PC-9 (cell line): ENCODE measurements at regions of chr4 and their contacts with region 1.

Region 1: GRCh38 chr4:167021545-167022155 is 212.6 kb downstream of the SPOCK3 start:
- DNase-seq: peak in 1 of 2 experiments; percentile 61
- H3K4me3 ChIP-seq: no peak overlapping the region
- H3K27ac ChIP-seq: no peak overlapping the region
- H3K4me1 ChIP-seq: no peaks in the 10 kb centered on the region
- H3K27me3 ChIP-seq: no peaks in the 10 kb centered on the region
- CTCF ChIP-seq: peak; percentile 87

Region 2: DNA sequence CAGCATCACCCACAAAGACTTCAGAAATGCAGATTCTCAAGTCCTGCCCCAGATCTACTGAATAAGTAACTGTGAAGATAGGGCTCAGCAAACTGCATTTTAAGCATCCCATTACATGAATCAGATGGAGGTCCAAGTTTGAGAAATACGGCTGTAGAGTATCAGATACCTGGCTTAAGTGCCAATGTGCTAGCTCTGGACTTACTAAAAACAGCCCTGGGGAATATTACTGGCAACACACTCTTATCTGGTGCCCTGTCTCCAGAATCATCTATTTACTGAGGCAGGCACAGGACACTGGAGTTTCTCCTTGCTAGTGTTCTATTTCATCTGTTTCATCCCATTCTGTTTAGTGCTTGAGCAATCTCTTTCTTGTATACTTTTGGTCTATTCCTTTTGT is 107.5 kb after region 1 on chr4:
- CTCF ChIA-PET with region 1: no interaction called
- POLR2A ChIA-PET with region 1: no interaction called
- intact Hi-C with region 1: no loop called
- DNase-seq: no peak
- H3K4me3 ChIP-seq: no peak overlapping the region
- H3K27ac ChIP-seq: no peak overlapping the region
- H3K4me1 ChIP-seq: no peaks in the 10 kb centered on the region
- H3K27me3 ChIP-seq: no peaks in the 10 kb centered on the region
- CTCF ChIP-seq: no peak

Region 3: DNA sequence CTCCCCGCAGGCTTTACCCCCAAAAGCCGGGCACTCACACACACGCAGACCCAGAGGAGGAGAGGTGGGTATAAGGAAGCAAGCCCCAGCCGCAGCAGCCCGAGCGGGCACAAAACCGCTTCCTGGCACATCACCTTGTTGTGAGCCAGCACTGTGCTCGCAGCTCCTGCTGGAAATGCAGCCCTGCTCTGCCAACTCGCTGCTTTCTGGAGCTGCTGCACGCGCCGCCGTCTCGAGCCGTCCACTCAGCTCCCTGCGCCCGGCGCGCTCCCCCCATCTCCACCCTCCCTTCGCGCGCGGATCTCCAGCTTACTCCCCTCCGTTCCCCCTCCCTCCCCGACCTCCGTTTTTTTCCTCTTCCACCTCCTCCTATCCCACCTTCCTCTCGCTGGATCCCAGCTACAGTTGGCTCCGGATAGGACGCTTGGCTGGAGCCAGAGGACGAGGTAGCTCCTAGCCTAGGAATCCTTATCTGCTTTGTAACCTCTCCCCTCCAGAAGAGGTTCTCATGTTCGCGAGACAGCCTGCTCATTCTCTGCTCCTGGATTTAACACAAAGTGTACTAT is 212.7 kb after region 1 on chr4 and contains the start of gene SPOCK3:
- CTCF ChIA-PET with region 1: no interaction called
- POLR2A ChIA-PET with region 1: no interaction called
- intact Hi-C with region 1: loop called (anchors 5 kb)
- DNase-seq: peak in 1 of 2 experiments; percentile 51
- H3K4me3 ChIP-seq: peak within 1 kb of the TSS; percentile 66
- H3K27ac ChIP-seq: no peak within 1 kb of the TSS
- H3K4me1 ChIP-seq: no peaks in the 10 kb centered on the region
- H3K27me3 ChIP-seq: no peaks in the 10 kb centered on the region
- CTCF ChIP-seq: no peak
- total RNA-seq, gene SPOCK3: not detected in 2 replicates

Region 4: GRCh38 chr4:167290678-167291077 is 269.0 kb after region 1 on chr4:
- CTCF ChIA-PET with region 1: no interaction called
- POLR2A ChIA-PET with region 1: no interaction called
- intact Hi-C with region 1: loop called (anchors 1 kb)
- DNase-seq: no peak
- H3K4me3 ChIP-seq: no peak overlapping the region
- H3K27ac ChIP-seq: no peak overlapping the region
- H3K4me1 ChIP-seq: no peaks in the 10 kb centered on the region
- H3K27me3 ChIP-seq: no peaks in the 10 kb centered on the region
- CTCF ChIP-seq: peak; percentile 55

Region 5: DNA sequence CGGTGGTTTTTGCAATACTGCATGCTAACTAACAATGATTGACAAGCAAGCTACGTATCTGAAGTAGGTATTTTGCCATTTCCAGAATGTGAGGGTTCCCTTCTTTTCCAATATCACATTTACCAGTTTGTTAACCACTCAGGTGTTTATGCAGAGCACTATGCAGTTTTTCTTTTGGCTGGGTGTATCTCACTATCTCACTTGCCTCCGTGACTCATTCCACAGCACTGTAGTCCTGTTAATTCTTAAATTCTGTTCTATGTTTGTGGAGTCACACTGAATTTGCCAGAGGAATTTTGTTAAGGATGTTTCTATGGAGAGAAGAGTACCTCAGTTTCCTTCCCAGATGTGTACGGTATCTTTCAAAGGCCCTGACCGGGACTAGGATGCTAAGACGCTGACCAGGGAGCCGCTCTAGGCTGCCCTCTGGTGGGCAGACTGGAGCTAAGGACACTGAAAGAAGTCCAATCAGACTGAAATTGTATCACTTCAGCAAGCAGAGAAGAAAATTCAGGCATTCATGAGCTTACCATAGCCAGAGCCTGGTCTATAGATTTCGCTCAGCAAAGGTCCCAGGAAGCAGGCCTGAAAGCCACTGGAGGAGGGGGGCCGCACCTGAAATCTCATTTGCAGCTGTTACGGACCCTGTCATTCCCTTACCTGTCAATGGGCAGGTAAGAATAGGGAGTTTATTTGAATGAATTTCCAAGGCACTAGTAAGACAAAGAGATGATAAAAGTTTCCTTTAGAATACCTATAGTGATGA is 601.0 kb after region 1 on chr4:
- CTCF ChIA-PET with region 1: no interaction called
- POLR2A ChIA-PET with region 1: no interaction called
- intact Hi-C with region 1: loop called (anchors 5 kb)
- DNase-seq: peak in 1 of 2 experiments; percentile 40
- H3K4me3 ChIP-seq: no peak overlapping the region
- H3K27ac ChIP-seq: no peak overlapping the region
- H3K4me1 ChIP-seq: no peaks in the 10 kb centered on the region
- H3K27me3 ChIP-seq: no peaks in the 10 kb centered on the region
- CTCF ChIP-seq: peak; percentile 72

Region 6: GRCh38 chr4:168076989-168077725 is 1055.5 kb after region 1 on chr4:
- CTCF ChIA-PET with region 1: no interaction called
- POLR2A ChIA-PET with region 1: no interaction called
- intact Hi-C with region 1: loop called (anchors 1 kb)
- DNase-seq: peak; percentile 34 to 49
- H3K4me3 ChIP-seq: no peak overlapping the region
- H3K27ac ChIP-seq: no peak overlapping the region
- H3K4me1 ChIP-seq: no peaks in the 10 kb centered on the region
- H3K27me3 ChIP-seq: no peaks in the 10 kb centered on the region
- CTCF ChIP-seq: peak; percentile 84

Region 7: DNA sequence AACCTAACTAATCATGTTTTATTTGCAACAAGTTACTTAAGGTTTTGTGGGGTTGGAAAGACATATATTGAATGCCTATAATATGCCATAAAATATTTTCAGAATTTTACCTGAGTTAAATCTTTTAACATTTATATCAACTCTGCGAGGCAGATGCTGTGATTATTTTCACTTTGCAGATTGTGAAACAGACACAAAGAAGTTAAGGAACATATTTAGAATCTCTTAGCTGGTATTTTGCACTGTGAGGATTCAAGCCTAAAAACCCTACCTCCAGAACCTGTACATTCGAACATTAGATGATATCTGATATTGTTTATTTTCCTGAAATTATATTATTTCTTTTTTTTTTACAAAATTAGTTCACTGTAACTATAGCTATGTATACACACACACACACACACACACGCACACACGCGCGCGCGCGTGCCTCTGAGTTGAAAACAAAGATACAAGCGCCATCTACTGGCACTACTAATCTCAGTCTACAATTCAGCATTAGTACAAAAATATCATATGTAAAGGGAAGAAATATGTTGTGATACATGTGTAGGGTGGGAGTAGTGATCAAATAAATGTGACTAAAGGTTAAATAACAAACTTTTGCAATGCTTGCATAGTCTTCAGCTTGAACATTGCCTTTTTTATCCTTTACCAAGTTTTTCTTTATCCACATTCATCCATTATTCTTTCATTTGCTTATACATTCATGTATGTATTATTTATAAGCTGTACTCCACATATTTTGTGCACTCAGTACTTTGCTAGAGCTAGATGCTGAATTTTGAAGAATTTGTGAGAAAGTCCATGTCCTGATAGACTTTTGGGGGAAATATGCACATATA is 1132.2 kb after region 1 on chr4:
- CTCF ChIA-PET with region 1: no interaction called
- POLR2A ChIA-PET with region 1: no interaction called
- intact Hi-C with region 1: loop called (anchors 2 kb)
- DNase-seq: peak; percentile 37 to 54
- H3K4me3 ChIP-seq: peak overlapping the region; percentile 48; the same call in 1 of the 2 replicates
- H3K27ac ChIP-seq: no peak overlapping the region
- H3K4me1 ChIP-seq: no peaks in the 10 kb centered on the region
- H3K27me3 ChIP-seq: no peaks in the 10 kb centered on the region
- CTCF ChIP-seq: peak; percentile 78